CD4-positive, alpha-beta memory T cell (primary cell): ENCODE measurements at regions of chr4 and their contacts with region 1.

Region 1: DNA sequence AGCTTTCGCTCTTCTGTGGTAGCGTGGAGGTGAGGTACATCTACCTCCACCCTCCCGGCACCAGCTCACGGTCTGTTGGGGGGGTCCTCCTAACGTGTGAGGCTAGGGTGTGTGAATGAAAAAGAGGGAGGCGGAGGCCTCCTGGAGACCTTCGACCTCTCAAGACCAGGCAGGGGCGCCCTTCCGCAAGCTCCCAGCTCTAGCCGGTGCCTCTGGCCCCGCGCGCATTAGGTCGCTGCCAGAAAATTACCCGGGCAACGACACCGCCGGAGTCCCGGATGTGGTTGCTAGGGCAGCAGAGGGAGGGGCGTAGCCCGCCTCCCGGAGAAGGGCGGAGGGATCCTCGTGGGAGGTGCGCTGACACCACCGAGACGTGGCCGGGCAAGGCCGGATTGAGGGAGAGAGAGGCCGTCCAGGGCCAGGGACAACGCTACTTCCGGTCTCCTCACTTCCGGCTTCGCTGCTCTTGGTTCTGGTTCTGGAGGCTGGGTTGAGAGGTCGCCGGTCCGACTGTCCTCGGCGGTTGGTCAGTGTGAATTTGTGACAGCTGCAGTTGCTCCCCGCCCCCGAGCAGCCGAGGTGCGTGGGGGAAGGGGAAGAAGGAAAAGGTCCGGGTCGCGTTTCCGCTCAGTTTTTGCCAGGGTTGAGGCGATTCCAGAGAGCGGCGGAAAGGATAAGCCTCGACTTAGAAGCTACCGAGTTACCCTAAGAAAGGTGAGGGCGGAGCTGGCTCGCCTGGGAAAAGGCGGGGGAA is at the starts of genes ARFIP1 and TIGD4:
- DNase-seq: peak; percentile 93 to 95 (median 94)
- H3K4me3 ChIP-seq: peak within 1 kb of the TSS; percentile 94 to 96
- H3K4me3 Mint-ChIP-seq: peak within 1 kb of the TSS; percentile 92 to 100 (median 99)
- H3K27ac ChIP-seq: peak within 1 kb of the TSS; percentile 78
- H3K27ac Mint-ChIP-seq: peak within 1 kb of the TSS; percentile 93 to 99 (median 98)
- H3K4me1 ChIP-seq: peaks cover 27% of the 10 kb centered on the region
- H3K4me1 Mint-ChIP-seq: peaks cover 28 to 49% (median 40%) of the 10 kb centered on the region in 4 donors
- H3K27me3 ChIP-seq: no peaks in the 10 kb centered on the region
- H3K27me3 Mint-ChIP-seq: peaks cover 0 to 2% of the 10 kb centered on the region in 2 donors
- total RNA-seq, gene ARFIP1: 12.5 to 16.5 TPM
- total RNA-seq, gene TIGD4: 0.12 to 0.17 TPM

Region 2: DNA sequence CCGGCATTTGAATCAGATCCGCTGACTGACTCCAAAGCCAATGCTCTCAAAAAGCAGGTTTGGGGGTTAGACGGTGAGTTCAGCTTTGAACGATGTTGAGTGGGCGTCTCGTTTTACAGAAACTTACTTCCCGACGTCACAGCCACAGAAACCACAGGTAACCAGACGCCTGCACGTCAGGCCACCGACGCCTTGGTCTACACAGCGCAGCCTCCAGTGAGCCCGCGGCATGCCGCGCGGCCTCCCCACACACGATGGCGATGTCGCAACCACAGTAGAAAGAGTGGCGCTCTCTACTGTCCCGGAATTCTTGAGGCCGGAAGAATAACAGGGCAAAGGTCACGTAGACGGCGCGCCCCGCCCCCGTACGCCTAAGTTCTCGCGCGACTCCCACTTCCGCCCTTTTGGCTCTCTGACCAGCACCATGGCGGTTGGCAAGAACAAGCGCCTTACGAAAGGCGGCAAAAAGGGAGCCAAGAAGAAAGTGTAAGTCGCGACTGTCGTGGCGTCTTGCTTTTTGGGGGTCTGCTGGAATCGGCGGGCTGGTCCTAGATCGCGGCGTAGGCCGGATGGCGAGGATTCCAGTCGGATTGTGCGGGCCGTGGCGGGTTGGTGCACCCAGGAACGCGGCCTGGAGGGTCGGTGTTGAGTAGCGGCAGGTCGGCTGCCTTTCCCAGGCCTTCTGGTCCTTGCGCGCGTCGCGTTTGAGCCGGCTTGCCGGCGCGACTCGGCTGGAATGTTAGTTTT is 1680.3 kb before region 1 on chr4 and contains the start of gene RPS3A:
- CTCF ChIA-PET with region 1: interaction called, 3 read pairs
- POLR2A ChIA-PET with region 1: interaction called, 6 read pairs
- intact Hi-C with region 1: loop called (anchors 1 kb)
- DNase-seq: peak; percentile 99 to 100 (median 99)
- H3K4me3 ChIP-seq: peak within 1 kb of the TSS; percentile 79 to 82
- H3K4me3 Mint-ChIP-seq: peak within 1 kb of the TSS; percentile 91 to 99 (median 96)
- H3K27ac ChIP-seq: peak within 1 kb of the TSS; percentile 86
- H3K27ac Mint-ChIP-seq: peak within 1 kb of the TSS; percentile 95 to 99 (median 98)
- H3K4me1 ChIP-seq: peaks cover 32% of the 10 kb centered on the region
- H3K4me1 Mint-ChIP-seq: peaks cover 19 to 41% (median 27%) of the 10 kb centered on the region in 4 donors
- H3K27me3 ChIP-seq: no peaks in the 10 kb centered on the region
- H3K27me3 Mint-ChIP-seq: peaks cover 0 to 3% of the 10 kb centered on the region in 2 donors
- total RNA-seq, gene RPS3A: 4,011 to 4,334 TPM

Region 3: DNA sequence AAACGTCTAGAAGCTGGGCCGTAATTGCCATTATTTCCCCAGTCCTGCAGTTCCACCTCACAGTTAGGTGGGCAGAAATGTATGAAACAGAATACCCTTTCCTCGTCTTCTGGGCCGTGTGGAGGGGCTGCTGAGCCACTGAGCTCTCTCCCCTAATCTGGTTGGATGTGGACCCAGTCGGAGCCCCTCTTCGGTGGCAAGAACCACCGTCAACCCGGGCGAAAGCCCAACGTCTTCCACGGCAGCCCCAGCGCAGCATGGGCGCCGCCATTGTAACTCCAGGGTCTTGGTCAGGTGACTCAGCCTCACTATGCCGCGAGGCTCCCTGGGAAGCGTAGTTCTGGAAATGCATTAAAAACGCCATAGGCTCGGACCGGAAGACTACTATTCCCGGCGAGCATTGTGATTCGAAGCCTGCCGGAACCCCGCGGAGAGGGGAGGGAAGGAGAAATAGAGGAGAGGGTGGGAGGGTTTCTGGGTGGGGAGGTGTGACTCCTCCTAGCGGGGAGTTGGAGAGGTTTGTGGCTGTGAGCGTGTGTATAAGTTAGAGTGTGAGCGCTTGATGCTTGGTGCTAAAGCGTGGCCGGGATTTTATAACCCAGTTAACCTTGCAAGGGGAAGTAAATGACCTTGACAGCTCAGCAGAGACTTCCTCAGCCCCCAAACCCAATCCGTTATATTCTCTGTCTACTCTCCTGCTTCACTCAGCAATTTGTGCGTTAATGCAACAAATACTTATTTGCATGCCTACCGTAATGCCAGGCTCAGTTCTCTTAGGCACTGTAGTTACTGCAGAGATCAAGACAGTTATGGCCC is 1018.8 kb before region 1 on chr4 and contains the start of gene GATB:
- CTCF ChIA-PET with region 1: no interaction called
- POLR2A ChIA-PET with region 1: no interaction called
- intact Hi-C with region 1: loop called (anchors 2 kb)
- DNase-seq: peak; percentile 91 to 97 (median 93)
- H3K4me3 ChIP-seq: peak within 1 kb of the TSS; percentile 77 to 84
- H3K4me3 Mint-ChIP-seq: peak within 1 kb of the TSS; percentile 96 to 100 (median 98)
- H3K27ac ChIP-seq: peak within 1 kb of the TSS; percentile 60
- H3K27ac Mint-ChIP-seq: peak within 1 kb of the TSS; percentile 87 to 98 (median 97)
- H3K4me1 ChIP-seq: peaks cover 13% of the 10 kb centered on the region
- H3K4me1 Mint-ChIP-seq: peaks cover 13 to 19% (median 17%) of the 10 kb centered on the region in 4 donors
- H3K27me3 ChIP-seq: no peaks in the 10 kb centered on the region
- H3K27me3 Mint-ChIP-seq: peaks cover under 1 to 1% of the 10 kb centered on the region in 2 donors
- total RNA-seq, gene GATB: 10.8 to 12.5 TPM

Region 4: GRCh38 chr4:152679414-152680281 is 100.0 kb before region 1 on chr4 and contains the start of gene TMEM154:
- CTCF ChIA-PET with region 1: interaction called, 3 read pairs
- POLR2A ChIA-PET with region 1: interaction called, 14 read pairs
- intact Hi-C with region 1: loop called (anchors 2 kb)
- DNase-seq: peak; percentile 78 to 82 (median 81)
- H3K4me3 ChIP-seq: peak within 1 kb of the TSS; percentile 30 to 62
- H3K4me3 Mint-ChIP-seq: peak within 1 kb of the TSS; percentile 91 to 97 (median 96)
- H3K27ac ChIP-seq: peak within 1 kb of the TSS; percentile 69
- H3K27ac Mint-ChIP-seq: peak within 1 kb of the TSS; percentile 90 to 98 (median 96)
- H3K4me1 ChIP-seq: peaks cover 47% of the 10 kb centered on the region
- H3K4me1 Mint-ChIP-seq: peaks cover 36 to 55% (median 47%) of the 10 kb centered on the region in 4 donors
- H3K27me3 ChIP-seq: no peaks in the 10 kb centered on the region
- H3K27me3 Mint-ChIP-seq: no peaks in the 10 kb centered on the region
- total RNA-seq, gene TMEM154: 35.2 to 38.6 TPM

Region 5: DNA sequence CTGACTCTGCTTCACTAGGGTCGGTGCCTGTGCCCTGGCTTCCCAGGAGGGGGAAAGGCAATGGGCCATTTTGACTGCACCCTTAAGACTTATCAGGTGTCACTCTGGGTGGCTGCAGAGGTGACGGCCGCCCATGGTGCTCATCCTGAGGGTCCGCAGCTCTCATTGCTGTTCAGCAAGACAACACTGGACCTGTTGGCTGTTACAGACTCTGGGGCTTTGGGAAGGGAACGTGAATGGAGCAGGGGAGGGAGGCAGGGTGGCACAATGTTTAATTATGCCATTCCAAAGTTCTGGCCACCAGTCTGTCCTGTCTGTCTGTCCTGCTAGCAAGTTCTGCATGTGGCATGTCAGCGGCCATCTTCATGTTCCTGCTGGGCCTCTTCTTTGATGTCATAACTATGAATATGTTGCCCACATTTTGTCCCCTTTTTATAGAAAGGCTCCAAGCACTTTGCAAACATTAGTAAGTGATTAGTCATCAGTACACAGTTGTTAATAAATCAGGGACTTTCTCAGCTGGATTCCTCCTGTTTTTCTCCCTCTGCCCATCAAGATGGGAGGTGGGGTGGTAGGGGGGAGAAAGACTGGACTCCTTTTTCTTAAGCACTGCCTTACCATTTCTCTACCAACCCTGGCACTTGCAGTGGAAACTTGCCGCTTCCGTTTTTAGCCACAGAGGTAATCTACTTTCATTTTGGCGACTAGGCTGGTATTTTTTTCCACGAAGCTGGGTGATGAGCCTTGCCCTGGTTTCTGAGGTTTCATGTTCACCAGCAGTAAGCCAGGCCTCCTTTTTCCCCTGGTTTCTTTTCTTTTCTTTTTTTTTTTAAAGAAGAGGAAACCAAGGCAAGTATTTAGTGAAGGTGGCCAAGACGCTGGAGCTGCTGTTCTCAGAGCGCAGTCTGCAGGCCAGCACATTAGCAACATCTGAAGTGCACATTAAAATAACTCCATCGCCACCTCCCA is 335.9 kb after region 1 on chr4:
- CTCF ChIA-PET with region 1: interaction called, 3 read pairs
- POLR2A ChIA-PET with region 1: interaction called, 3 read pairs
- intact Hi-C with region 1: loop called (anchors 5 kb)
- DNase-seq: peak; percentile 85 to 92 (median 89)
- H3K4me3 ChIP-seq: peak overlapping the region in 1 of 2 donors; percentile 37
- H3K4me3 Mint-ChIP-seq: peak overlapping the region in 1 of 8 donors; percentile 74
- H3K27ac ChIP-seq: peak overlapping the region; percentile 68
- H3K27ac Mint-ChIP-seq: no peak overlapping the region
- H3K4me1 ChIP-seq: peaks cover 62% of the 10 kb centered on the region
- H3K4me1 Mint-ChIP-seq: peaks cover 0 to 18% (median 9%) of the 10 kb centered on the region in 4 donors
- H3K27me3 ChIP-seq: no peaks in the 10 kb centered on the region
- H3K27me3 Mint-ChIP-seq: no peaks in the 10 kb centered on the region